ENCODE measurements at regions of chr20 and their contacts with region 1.

Region 1: GRCh38 chr20:12970372-12970821 is 38.4 kb upstream of the SPTLC3 start:
- DNase-seq: no peak
- H3K4me3 ChIP-seq: no peak overlapping the region
- CTCF ChIP-seq: peak; percentile 54

Region 2: GRCh38 chr20:11255860-11256259 is 1714.5 kb before region 1 on chr20:
- CTCF ChIA-PET with region 1: no interaction called
- POLR2A ChIA-PET with region 1: no interaction called
- DNase-seq: no peak
- H3K4me3 ChIP-seq: no peak overlapping the region
- CTCF ChIP-seq: no peak

Region 3: DNA sequence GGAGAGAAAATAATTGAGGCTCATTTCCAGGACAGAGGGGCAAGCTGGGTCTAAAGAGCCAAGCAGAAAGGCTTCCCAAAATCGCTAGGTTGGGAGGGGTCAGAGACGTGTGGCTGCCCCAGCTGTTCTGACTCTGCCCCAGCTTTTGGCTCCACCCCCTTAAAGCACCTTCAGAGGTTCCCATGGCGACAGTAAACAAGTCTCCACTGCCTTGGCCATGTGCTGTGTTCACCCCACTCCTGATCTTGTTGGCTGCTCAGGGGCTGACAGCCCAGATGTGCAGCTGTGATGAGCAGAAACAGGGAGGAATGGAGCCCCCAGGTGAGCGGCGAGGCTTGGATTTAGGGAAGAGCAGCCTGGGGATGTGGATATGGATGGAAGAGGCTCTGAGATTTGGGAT is 34.4 kb before region 1 on chr20:
- CTCF ChIA-PET with region 1: interaction called, 582 read pairs
- POLR2A ChIA-PET with region 1: no interaction called
- DNase-seq: no peak
- H3K4me3 ChIP-seq: no peak overlapping the region
- CTCF ChIP-seq: no peak

Region 4: GRCh38 chr20:12956303-12956702 is 14.1 kb before region 1 on chr20:
- CTCF ChIA-PET with region 1: interaction called, 11 read pairs
- POLR2A ChIA-PET with region 1: no interaction called
- DNase-seq: no peak
- H3K4me3 ChIP-seq: no peak overlapping the region
- CTCF ChIP-seq: no peak

Region 5: DNA sequence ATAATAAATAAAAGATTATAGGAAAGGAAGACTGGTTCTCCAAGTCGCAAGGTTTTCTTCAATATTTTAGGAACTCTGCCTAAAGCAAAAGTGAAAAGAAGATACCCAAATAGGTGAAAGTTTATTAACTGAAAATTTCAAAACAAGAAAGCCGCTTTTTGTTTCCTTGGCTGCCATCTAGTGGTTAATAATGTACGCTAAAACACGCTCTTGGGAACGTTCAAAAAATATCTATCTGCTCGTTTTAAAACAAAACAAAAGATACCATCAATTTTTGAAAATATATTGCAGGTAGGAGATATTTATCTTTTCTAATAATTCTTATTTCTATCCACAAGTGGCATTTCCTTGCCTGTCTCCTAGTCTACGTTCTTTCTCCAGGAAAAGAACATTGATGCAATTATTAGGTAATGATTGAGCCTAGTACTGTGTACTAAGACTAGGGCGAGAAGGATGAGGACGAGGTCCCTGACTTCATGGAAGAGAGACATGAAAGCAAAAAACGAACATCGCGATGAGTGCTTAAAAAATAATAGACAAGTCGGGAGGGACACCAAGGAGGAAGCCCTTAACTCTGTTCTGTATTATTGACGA is 135.6 kb after region 1 on chr20:
- CTCF ChIA-PET with region 1: interaction called, 144 read pairs
- POLR2A ChIA-PET with region 1: no interaction called
- DNase-seq: peak; percentile 4
- H3K4me3 ChIP-seq: no peak overlapping the region
- CTCF ChIP-seq: peak; percentile 33

Region 6: GRCh38 chr20:13299401-13299800 is 329.0 kb after region 1 on chr20:
- CTCF ChIA-PET with region 1: no interaction called
- POLR2A ChIA-PET with region 1: no interaction called
- DNase-seq: no peak
- H3K4me3 ChIP-seq: no peak overlapping the region
- CTCF ChIP-seq: no peak

Region 7: GRCh38 chr20:13771853-13772453 is 801.6 kb after region 1 on chr20:
- CTCF ChIA-PET with region 1: interaction called, 10 read pairs
- POLR2A ChIA-PET with region 1: no interaction called
- DNase-seq: no peak
- H3K4me3 ChIP-seq: no peak overlapping the region
- CTCF ChIP-seq: peak; percentile 2